ENCODE measurements at regions of chr10 and their contacts with region 1.

Region 1: GRCh38 chr10:69408318-69409175 is 8.2 kb downstream of the TACR2 start:
- DNase-seq: peak; percentile 92
- H3K4me3 ChIP-seq: no peak overlapping the region
- H3K27ac ChIP-seq: no peak overlapping the region
- H3K4me1 ChIP-seq: peaks cover 28% of the 10 kb centered on the region
- CTCF ChIP-seq: peak; percentile 36

Region 2: GRCh38 chr10:69004821-69005220 is 403.7 kb before region 1 on chr10:
- CTCF ChIA-PET with region 1: no interaction called
- POLR2A ChIA-PET with region 1: no interaction called
- intact Hi-C with region 1: loop called (anchors 10 kb)
- DNase-seq: peak; percentile 49
- H3K4me3 ChIP-seq: no peak overlapping the region
- H3K27ac ChIP-seq: no peak overlapping the region
- H3K4me1 ChIP-seq: no peaks in the 10 kb centered on the region
- CTCF ChIP-seq: peak; percentile 76

Region 3: GRCh38 chr10:69237528-69238159 is 170.9 kb before region 1 on chr10:
- CTCF ChIA-PET with region 1: no interaction called
- POLR2A ChIA-PET with region 1: no interaction called
- intact Hi-C with region 1: loop called (anchors 1 kb)
- DNase-seq: peak; percentile 76
- H3K4me3 ChIP-seq: no peak overlapping the region
- H3K27ac ChIP-seq: no peak overlapping the region
- H3K4me1 ChIP-seq: no peaks in the 10 kb centered on the region
- CTCF ChIP-seq: peak; percentile 96

Measured in OCI-LY7 (cell line).